ENCODE measurements at regions of chr10 and their contacts with region 1.

Region 1: DNA sequence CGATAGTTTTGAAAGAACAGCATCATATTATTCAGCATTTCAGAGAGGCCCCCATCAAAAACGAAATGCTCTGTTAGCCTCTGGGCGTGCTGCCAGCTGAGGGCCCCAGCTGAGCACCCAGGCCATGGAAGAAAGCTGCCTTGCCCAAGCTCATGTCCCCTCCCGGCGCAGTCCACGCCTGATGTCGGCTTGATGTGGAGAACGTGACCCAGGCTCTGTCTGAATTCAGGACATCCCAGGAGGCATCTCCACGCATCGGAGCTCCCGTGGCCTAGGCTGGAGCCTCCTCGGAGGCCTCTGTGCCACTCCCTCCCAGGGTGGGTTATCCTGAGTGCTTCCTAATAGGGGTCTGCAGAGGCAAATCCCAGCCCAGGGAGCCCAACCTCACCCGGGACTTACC is 218.3 kb upstream of the AKR1E2 start:
- DNase-seq: no peak
- H3K4me3 ChIP-seq: no peak overlapping the region
- CTCF ChIP-seq: no peak
- POLR2A ChIP-seq: no peak

Region 2: DNA sequence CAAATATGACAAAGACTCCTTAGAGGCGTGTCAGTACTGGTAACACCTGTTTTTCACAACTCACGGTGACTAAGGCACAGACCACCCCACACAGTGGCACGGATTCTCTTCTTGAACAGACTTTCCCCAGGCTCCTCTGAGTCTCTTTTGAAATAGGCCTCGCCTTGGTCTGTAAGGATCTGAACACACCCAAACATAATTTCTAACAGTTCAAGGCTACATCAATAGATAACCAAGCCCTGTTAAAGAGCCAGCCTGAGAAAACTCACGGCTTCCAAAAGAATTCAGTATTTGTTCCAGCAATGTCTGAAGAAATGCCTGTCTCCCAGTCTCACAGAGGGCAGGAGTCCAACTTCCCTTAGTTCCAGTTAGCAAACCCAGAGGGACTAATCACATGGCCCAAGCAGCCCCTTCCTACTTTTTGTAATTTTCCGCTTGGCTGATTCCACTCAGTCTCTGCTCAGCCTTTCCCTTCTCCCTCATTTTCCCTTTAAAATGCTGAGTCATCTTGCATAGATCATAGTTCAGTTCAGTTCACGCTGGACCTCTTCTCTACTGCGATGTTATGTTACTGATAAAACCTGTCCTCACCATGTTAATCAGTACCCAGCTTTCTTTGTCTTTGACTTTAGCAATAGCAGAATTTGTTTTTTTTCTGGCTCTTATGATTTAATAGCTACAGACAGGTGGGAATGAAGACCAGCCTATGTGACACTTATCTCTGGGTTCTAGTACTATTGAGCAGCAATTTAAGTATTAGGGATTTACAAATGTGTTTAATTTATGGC is 463.9 kb after region 1 on chr10:
- intact Hi-C with region 1: loop called (anchors 10 kb)
- DNase-seq: peak; percentile 84 to 90
- H3K4me3 ChIP-seq: no peak overlapping the region
- CTCF ChIP-seq: no peak
- POLR2A ChIP-seq: no peak

Measured in lower leg skin (tissue), 4 donors.